ENCODE measurements at regions of chr21 and their contacts with region 1.

Region 1: DNA sequence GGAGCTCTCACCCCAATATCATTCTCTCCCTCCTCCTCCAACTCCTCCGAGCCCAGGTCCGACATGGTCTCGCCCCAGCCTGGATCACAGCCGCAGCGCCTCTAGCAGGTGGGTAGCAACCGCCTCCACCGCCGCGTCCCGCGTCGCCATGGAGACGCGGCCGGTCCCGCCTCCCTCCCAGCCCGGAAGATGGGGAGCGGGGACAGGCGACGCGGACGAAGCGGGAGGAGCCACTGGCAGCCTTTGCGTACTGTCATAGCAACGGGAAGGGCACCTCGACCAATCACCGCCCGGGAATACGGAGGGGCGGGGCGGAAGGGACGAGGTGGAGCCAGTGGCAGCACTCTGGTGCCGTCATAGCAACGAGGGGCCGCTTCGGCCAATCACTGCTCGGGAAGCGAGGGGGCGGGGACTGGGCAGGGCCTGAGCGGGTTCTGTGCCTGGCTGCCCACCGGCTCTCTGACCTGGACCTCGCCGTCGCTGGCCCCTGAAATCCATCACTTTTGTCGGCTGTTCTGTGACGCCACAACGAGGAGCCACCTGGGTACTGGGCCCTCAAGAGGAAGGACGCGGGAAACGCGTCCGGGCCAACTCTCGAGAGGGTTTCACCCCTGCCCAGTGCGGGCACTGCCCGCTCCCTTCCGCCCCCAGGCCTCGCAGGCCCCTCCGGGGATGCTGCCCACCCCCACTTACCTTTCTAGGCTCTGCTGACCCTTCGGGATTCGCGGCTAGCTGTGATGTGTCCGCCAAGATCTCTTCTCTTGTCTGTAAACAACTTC is at the start of gene RSPH1:
- DNase-seq: peak; percentile 96 to 99 (median 99)
- ATAC-seq: peak; percentile 98
- H3K4me3 ChIP-seq: peak within 1 kb of the TSS; percentile 91
- H3K4me3 Mint-ChIP-seq: peak within 1 kb of the TSS; percentile 85 to 96 (median 92)
- H3K27ac ChIP-seq: peak within 1 kb of the TSS; percentile 93
- H3K27ac Mint-ChIP-seq: peak within 1 kb of the TSS; percentile 18 to 98 (median 92)
- H3K4me1 ChIP-seq: peaks cover 11 to 15% of the 10 kb centered on the region in 2 donors
- H3K4me1 Mint-ChIP-seq: peaks cover 11 to 30% (median 26%) of the 10 kb centered on the region in 7 donors
- H3K27me3 ChIP-seq: no peaks in the 10 kb centered on the region
- H3K27me3 Mint-ChIP-seq: peaks cover 0 to 26% (median 0%) of the 10 kb centered on the region in 5 donors
- total RNA-seq, gene RSPH1: 0.27 to 0.40 TPM in 2 of 5 experiments, not detected in the others

Region 2: GRCh38 chr21:41879190-41879998 is 616.9 kb before region 1 on chr21 and contains the start of gene PRDM15:
- CTCF ChIA-PET with region 1: no interaction called
- POLR2A ChIA-PET with region 1: no interaction called
- intact Hi-C with region 1: no loop called
- DNase-seq: peak; percentile 69 to 88 (median 77)
- ATAC-seq: peak; percentile 85
- H3K4me3 ChIP-seq: peak within 1 kb of the TSS; percentile 84
- H3K4me3 Mint-ChIP-seq: peak within 1 kb of the TSS; percentile 88 to 95 (median 92)
- H3K27ac ChIP-seq: peak within 1 kb of the TSS; percentile 85
- H3K27ac Mint-ChIP-seq: peak within 1 kb of the TSS; percentile 92 to 97 (median 95)
- H3K4me1 ChIP-seq: peaks cover 9 to 16% of the 10 kb centered on the region in 2 donors
- H3K4me1 Mint-ChIP-seq: peaks cover 20 to 35% (median 29%) of the 10 kb centered on the region in 7 donors
- H3K27me3 ChIP-seq: no peaks in the 10 kb centered on the region
- H3K27me3 Mint-ChIP-seq: no peaks in the 10 kb centered on the region
- total RNA-seq, gene PRDM15: 10.0 to 20.1 (median 15.9) TPM

Region 3: GRCh38 chr21:42009831-42010523 is 486.3 kb before region 1 on chr21 and contains the start of gene ZBTB21:
- CTCF ChIA-PET with region 1: no interaction called
- POLR2A ChIA-PET with region 1: no interaction called
- intact Hi-C with region 1: loop called in 1 of 2 experiments (anchors 5 kb)
- DNase-seq: peak; percentile 96 to 99 (median 98)
- ATAC-seq: peak; percentile 87
- H3K4me3 ChIP-seq: peak within 1 kb of the TSS; percentile 78
- H3K4me3 Mint-ChIP-seq: peak within 1 kb of the TSS; percentile 93 to 99 (median 96)
- H3K27ac ChIP-seq: peak within 1 kb of the TSS; percentile 92
- H3K27ac Mint-ChIP-seq: peak within 1 kb of the TSS; percentile 99 to 100 (median 99)
- H3K4me1 ChIP-seq: peaks cover 0 to 5% of the 10 kb centered on the region in 2 donors
- H3K4me1 Mint-ChIP-seq: peaks cover 7 to 48% (median 41%) of the 10 kb centered on the region in 7 donors
- H3K27me3 ChIP-seq: no peaks in the 10 kb centered on the region
- H3K27me3 Mint-ChIP-seq: peaks cover 0 to 24% (median 0%) of the 10 kb centered on the region in 5 donors
- total RNA-seq, gene ZBTB21: 16.8 to 137 (median 25.2) TPM

Region 4: DNA sequence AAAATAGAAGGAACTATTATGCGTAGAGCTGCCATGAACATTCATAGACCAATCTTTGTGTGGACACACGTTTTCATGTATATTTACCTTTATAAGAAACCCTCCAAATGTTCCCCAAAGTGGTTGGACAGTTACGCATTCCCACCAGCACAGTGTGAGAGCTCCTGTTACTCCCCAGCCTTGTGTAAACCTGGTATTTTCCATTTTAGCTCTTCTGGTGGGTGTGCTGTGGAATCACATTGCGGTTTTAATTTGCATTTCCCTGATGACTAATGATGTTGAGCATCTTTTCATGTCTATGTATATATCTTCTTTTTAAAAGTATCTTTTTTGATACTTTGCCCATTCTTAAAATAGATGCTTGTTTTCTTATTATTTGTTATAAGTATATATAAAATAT is 95.8 kb before region 1 on chr21:
- CTCF ChIA-PET with region 1: interaction called, 3 read pairs
- POLR2A ChIA-PET with region 1: no interaction called
- intact Hi-C with region 1: loop called in 1 of 2 experiments (anchors 5 kb)
- DNase-seq: peak in 1 of 9 donors; percentile 54
- ATAC-seq: no peak
- H3K4me3 ChIP-seq: no peak overlapping the region
- H3K4me3 Mint-ChIP-seq: peak overlapping the region in 4 of 10 donors; percentile 18 to 37 (median 32)
- H3K27ac ChIP-seq: no peak overlapping the region
- H3K27ac Mint-ChIP-seq: peak overlapping the region in 5 of 9 donors; percentile 8 to 87 (median 32)
- H3K4me1 ChIP-seq: peaks cover 21 to 42% of the 10 kb centered on the region in 2 donors
- H3K4me1 Mint-ChIP-seq: peaks cover 32 to 71% (median 61%) of the 10 kb centered on the region in 7 donors
- H3K27me3 ChIP-seq: no peaks in the 10 kb centered on the region
- H3K27me3 Mint-ChIP-seq: no peaks in the 10 kb centered on the region

Region 5: DNA sequence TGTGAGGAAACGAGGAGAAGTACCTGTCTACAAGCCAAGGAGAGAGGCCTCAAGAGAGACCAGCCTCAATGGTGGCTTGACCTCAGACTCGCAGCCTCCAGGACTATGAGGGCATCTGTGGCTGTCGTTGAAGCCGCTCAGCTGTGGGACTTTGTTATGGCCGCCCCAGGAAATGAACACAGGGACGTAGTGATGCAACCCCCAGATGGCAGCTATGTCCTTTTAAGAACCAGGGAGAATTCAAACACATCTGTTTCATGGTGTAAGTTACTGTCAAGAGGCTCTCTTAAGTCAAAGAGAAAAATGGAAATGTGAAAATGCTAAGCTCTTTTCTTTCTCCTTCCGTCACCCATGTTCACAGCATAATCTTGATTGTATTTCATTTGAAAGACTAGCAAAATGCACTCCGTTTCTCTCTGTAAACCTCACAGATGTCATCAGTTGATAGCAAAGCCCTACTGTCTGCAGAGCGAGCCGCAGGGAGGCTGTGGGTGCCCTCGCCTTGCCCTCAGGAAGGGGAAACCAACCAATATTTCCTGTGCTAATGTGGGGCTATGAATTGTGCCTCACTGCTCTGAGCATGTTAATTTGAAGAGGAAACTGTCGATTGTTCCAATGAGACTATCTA is 71.3 kb before region 1 on chr21:
- CTCF ChIA-PET with region 1: interaction called, 3 read pairs
- POLR2A ChIA-PET with region 1: no interaction called
- intact Hi-C with region 1: loop called in 1 of 2 experiments (anchors 1 kb)
- DNase-seq: peak; percentile 44 to 90 (median 84)
- ATAC-seq: peak; percentile 94
- H3K4me3 ChIP-seq: peak overlapping the region; percentile 22
- H3K4me3 Mint-ChIP-seq: peak overlapping the region; percentile 54 to 86 (median 80)
- H3K27ac ChIP-seq: peak overlapping the region; percentile 85
- H3K27ac Mint-ChIP-seq: peak overlapping the region; percentile 83 to 94 (median 89)
- H3K4me1 ChIP-seq: peaks cover 68 to 71% of the 10 kb centered on the region in 2 donors
- H3K4me1 Mint-ChIP-seq: peaks cover 59 to 88% (median 81%) of the 10 kb centered on the region in 7 donors
- H3K27me3 ChIP-seq: no peaks in the 10 kb centered on the region
- H3K27me3 Mint-ChIP-seq: peaks cover 0 to 6% (median 0%) of the 10 kb centered on the region in 5 donors

Region 6: DNA sequence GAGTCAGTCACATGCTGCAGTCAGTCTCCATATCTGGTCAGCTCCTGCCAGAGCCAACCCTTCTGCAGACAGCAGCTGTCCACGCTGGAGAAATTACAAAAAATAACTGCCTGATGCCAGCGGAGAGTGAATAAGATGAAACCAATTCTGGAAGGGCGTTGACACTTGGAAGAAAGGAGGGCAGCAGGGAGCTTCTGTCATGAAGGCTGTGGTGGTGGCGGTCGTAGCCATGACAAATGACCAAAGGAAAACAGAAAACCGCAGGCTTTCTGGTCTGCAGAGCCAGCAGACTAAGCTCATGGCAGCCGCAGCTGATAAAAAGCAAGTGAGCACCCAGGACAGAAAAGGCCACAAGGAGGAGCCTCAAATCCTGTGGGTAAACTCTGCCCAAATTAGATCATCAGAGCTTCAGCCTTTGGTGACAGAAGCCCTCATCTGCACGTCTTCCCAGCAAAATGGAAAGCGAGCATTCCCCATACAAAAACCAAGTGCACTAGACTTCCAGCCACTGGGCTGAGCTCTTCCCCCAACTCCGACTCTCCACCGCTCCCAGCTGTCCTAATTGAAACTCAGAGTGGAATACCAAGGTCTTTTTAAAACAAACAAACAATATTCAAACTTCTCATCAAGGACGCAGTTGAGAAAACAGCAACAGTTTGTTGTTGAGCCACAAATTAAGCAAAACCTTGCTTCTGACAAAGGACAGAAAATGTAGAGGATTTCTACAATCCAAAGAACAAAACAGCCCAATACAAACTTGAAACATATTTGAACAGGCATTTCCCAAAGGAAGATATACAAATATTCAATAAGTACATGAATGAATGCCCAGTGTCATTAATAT is 28.9 kb before region 1 on chr21:
- CTCF ChIA-PET with region 1: no interaction called
- POLR2A ChIA-PET with region 1: no interaction called
- intact Hi-C with region 1: loop called (anchors 1 kb)
- DNase-seq: no peak
- ATAC-seq: no peak
- H3K4me3 ChIP-seq: no peak overlapping the region
- H3K4me3 Mint-ChIP-seq: no peak overlapping the region
- H3K27ac ChIP-seq: no peak overlapping the region
- H3K27ac Mint-ChIP-seq: peak overlapping the region in 3 of 9 donors; percentile 44 to 75 (median 48)
- H3K4me1 ChIP-seq: peaks cover 18 to 31% of the 10 kb centered on the region in 2 donors
- H3K4me1 Mint-ChIP-seq: peaks cover 31 to 45% (median 40%) of the 10 kb centered on the region in 7 donors
- H3K27me3 ChIP-seq: no peaks in the 10 kb centered on the region
- H3K27me3 Mint-ChIP-seq: peaks cover 0 to 14% (median 0%) of the 10 kb centered on the region in 5 donors

Region 7: GRCh38 chr21:42524349-42525151 is 28.2 kb after region 1 on chr21:
- CTCF ChIA-PET with region 1: no interaction called
- POLR2A ChIA-PET with region 1: no interaction called
- intact Hi-C with region 1: loop called (anchors 1 kb)
- DNase-seq: peak in 3 of 9 donors; percentile 10 to 25 (median 20)
- ATAC-seq: peak; percentile 60
- H3K4me3 ChIP-seq: no peak overlapping the region
- H3K4me3 Mint-ChIP-seq: peak overlapping the region in 7 of 10 donors; percentile 20 to 52 (median 43)
- H3K27ac ChIP-seq: no peak overlapping the region
- H3K27ac Mint-ChIP-seq: peak overlapping the region in 8 of 9 donors; percentile 6 to 88 (median 56)
- H3K4me1 ChIP-seq: peaks cover 16 to 30% of the 10 kb centered on the region in 2 donors
- H3K4me1 Mint-ChIP-seq: peaks cover 39 to 64% (median 54%) of the 10 kb centered on the region in 7 donors
- H3K27me3 ChIP-seq: no peaks in the 10 kb centered on the region
- H3K27me3 Mint-ChIP-seq: no peaks in the 10 kb centered on the region

Region 8: DNA sequence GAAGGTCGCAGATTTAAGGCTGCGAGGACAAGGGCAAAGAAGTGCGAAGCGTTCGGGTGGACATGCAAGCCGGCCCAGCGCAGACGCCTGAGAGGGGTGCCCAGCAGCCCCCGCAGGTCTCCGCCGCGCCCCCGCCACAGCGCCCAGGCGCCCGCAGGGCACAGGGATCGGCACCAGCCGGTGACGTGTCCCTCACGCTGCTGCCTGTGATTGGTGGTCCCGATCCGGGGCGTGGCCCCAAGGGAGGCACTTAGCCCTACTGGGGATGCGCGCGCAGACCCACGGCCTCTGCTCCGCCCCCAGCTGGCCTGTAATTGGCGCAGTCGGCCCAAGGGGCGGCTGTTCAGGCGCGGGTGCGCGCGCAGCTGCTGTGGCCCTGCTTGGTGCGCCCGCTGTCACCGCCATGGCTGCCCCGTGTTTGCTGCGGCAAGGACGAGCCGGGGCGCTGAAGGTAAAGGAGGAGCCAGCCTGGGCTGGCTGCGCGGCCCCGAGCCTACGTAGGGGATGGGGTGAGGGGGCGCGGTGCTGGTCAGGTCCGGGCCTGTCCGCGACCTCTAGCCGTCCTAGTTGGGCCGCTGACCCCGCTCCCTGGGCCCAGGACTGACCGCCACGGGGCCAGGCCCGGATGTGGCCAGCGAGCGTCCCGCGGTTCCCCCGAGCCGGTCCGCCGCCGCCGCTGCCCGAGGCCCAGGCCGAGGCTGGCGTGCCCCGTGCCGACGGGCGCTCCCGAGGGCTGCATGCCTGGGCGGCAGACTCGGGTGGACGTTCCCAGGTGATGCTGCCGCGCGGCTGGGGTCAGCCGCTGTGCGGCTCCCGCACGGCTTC is 396.8 kb after region 1 on chr21 and contains the start of gene NDUFV3:
- CTCF ChIA-PET with region 1: no interaction called
- POLR2A ChIA-PET with region 1: no interaction called
- intact Hi-C with region 1: loop called in 1 of 2 experiments (anchors 1 kb)
- DNase-seq: peak; percentile 96 to 100 (median 98)
- ATAC-seq: peak; percentile 96
- H3K4me3 ChIP-seq: peak within 1 kb of the TSS; percentile 94
- H3K4me3 Mint-ChIP-seq: peak within 1 kb of the TSS; percentile 87 to 96 (median 90)
- H3K27ac ChIP-seq: peak within 1 kb of the TSS; percentile 97
- H3K27ac Mint-ChIP-seq: peak within 1 kb of the TSS; percentile 92 to 98 (median 97)
- H3K4me1 ChIP-seq: peaks cover 6 to 8% of the 10 kb centered on the region in 2 donors
- H3K4me1 Mint-ChIP-seq: peaks cover 14 to 25% (median 22%) of the 10 kb centered on the region in 7 donors
- H3K27me3 ChIP-seq: no peaks in the 10 kb centered on the region
- H3K27me3 Mint-ChIP-seq: no peaks in the 10 kb centered on the region
- total RNA-seq, gene NDUFV3: 25.3 to 33.1 (median 30.9) TPM